ENCODE measurements at regions of chr6 and their contacts with region 1.

Region 1: DNA sequence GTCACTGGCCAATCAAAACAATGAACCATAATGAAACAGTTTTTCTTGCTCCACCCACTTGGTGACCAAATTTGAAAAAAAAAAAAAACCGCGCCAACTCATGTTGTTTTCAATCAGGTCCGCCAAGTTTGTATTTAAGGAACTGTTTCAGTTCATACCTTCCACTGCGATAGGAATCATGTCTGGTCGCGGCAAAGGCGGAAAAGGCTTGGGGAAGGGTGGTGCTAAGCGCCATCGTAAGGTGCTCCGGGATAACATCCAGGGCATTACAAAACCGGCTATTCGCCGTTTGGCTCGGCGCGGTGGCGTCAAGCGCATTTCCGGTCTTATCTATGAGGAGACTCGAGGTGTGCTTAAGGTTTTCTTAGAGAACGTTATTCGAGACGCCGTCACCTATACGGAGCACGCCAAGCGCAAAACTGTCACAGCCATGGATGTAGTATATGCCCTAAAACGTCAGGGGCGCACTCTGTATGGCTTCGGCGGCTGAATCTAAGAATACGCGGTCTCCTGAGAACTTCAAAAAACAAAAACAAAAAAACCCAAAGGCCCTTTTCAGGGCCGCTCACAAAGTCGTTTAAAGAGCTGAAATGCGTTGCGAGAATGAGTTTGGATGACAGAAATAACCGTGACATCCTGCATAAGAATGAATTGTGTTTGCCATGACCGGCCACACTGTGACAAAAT is 16.7 kb downstream of the HFE start:
- DNase-seq: peak; percentile 69
- H3K4me3 ChIP-seq: peak overlapping the region; percentile 55 to 65
- H3K27ac ChIP-seq: peak overlapping the region; percentile 85 to 97
- H3K4me1 ChIP-seq: peaks cover 7 to 17% of the 10 kb centered on the region in 2 experiments
- H3K27me3 ChIP-seq: no peaks in the 10 kb centered on the region
- CTCF ChIP-seq: peak; percentile 62
- EP300 ChIP-seq: peak; percentile 91 to 97
- RAD21 ChIP-seq: no peak

Region 2: DNA sequence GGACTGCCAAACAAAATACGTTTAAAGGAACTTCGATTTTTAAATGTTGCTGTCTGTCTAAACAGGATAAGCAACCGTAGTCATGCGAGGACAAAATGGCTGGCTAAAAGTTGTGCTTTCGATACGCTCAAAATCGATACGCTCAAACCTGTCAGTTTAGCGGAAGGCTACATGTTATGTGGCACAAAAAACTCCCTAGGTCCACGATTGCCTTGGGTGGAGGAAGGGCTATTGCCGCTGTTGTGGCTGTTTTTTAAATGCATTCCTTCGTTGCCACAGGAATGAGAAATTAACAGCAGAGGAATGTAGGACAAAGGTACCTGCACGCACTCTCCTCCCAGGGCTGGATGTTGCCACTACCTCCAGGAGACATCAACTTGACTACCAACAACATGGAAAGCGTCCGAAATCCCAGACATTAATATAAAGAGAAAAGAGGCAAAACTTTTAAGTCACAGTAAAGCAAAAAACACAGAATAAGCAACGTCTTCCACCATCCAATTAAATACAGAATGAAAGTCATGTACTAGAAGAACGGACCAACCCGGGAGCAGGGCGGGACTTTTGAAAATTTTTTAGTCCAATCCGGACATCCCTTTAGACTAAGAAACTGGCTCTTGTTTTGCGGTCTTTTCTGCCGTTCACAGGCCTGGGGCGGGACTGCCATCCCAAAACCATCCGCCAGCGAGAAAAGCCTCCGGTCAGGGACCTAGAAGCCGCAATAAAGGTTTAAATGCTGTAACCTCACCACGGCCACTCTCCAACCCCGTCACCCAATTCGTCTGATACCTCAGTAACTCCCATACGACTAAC is 48.9 kb before region 1 on chr6:
- CTCF ChIA-PET with region 1: interaction called, 660 read pairs
- POLR2A ChIA-PET with region 1: interaction called, 24 read pairs
- DNase-seq: peak; percentile 57
- H3K4me3 ChIP-seq: peak overlapping the region; percentile 79 to 80
- H3K27ac ChIP-seq: peak overlapping the region; percentile 97 to 98
- H3K4me1 ChIP-seq: peaks cover 0 to 7% of the 10 kb centered on the region in 2 experiments; a peak in 3 of 4 replicates
- H3K27me3 ChIP-seq: no peaks in the 10 kb centered on the region
- CTCF ChIP-seq: no peak
- EP300 ChIP-seq: no peak; a peak in 1 of 4 replicates
- RAD21 ChIP-seq: no peak

Region 3: DNA sequence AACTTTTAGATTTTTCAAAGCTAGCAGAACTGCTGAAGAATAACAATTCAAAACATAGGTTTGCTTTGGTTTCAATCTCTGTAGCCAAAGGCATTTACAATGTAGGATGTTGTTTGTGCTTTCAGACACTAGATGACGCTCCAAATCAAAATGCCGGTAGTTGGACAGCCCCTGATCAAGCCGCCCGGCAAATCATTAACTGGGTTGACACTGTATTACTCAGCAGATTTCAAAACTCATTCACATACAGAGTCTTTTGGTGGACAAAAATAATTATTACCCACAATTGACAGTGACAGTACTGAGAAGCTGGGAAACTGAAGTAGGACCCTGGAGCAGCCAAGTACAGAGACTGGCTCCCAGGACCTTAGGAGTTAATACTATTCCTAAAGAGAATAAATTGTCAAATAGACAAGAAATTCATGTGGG is 37.9 kb before region 1 on chr6:
- CTCF ChIA-PET with region 1: interaction called, 660 read pairs
- POLR2A ChIA-PET with region 1: interaction called, 17 read pairs
- DNase-seq: peak; percentile 66
- H3K4me3 ChIP-seq: peak overlapping the region in 1 of 2 experiments; percentile 23; a peak in 1 of 4 replicates
- H3K27ac ChIP-seq: no peak overlapping the region
- H3K4me1 ChIP-seq: no peaks in the 10 kb centered on the region
- H3K27me3 ChIP-seq: no peaks in the 10 kb centered on the region
- CTCF ChIP-seq: peak; percentile 91
- EP300 ChIP-seq: no peak
- RAD21 ChIP-seq: peak; percentile 86

Region 4: DNA sequence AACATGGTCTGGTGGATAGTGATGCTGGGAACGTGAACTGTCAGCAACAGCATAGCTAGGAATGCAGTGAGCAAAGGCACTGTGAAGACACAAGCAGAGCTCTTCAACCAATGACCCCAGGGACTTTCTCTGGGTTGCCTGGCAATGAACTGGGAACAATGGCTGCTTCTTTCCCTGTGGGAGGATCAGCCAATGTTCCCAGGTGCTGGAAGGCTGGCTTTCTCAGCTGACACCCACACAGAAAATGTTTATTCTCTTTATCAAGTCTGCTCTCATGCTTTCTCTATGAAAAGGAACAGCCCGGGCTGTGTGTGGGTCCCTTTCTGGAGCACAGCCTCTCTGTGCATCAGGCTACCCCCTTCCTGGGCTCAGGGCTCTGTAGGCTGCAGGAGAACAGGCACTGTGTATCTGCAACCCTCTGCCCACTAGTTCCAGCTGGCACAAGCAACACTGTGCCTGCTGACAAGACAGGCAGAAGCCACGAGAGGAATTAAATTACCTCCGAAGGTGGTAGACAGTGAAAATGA is 37.5 kb after region 1 on chr6:
- CTCF ChIA-PET with region 1: no interaction called
- POLR2A ChIA-PET with region 1: no interaction called
- DNase-seq: no peak
- H3K4me3 ChIP-seq: no peak overlapping the region
- H3K27ac ChIP-seq: peak overlapping the region in 1 of 2 experiments; percentile 44; a peak in 1 of 4 replicates
- H3K4me1 ChIP-seq: peaks cover 0 to 13% of the 10 kb centered on the region in 2 experiments; a peak in 2 of 4 replicates
- H3K27me3 ChIP-seq: no peaks in the 10 kb centered on the region
- CTCF ChIP-seq: no peak
- EP300 ChIP-seq: no peak
- RAD21 ChIP-seq: no peak

Region 5: DNA sequence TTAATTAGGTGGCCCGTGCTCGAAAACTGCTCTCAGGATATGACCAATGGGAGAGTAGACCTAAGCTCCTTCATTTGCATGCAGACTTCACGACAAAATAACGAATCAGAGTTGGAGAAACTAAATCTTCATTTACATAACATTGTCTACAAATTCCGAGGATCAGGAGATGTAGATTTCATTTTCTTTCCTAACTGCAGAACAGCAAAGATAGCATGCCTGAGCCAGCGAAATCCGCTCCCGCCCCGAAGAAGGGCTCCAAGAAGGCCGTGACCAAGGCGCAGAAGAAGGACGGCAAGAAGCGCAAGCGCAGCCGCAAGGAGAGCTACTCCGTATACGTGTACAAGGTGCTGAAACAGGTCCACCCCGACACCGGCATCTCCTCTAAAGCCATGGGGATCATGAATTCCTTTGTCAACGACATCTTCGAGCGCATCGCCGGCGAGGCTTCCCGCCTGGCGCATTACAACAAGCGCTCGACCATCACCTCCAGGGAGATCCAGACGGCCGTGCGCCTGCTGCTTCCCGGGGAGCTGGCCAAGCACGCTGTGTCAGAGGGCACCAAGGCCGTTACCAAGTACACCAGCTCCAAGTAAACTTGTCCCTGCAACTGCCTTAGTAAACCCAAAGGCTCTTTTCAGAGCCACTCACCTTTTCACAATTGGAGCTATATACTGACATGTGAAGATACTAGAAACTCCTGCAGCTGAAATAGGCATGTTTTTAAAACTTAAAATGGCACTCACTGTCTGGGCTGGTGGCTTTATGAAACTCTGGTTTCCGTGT is 79.9 kb after region 1 on chr6:
- CTCF ChIA-PET with region 1: interaction called, 3 read pairs
- POLR2A ChIA-PET with region 1: interaction called, 13 read pairs
- DNase-seq: peak; percentile 71
- H3K4me3 ChIP-seq: peak overlapping the region; percentile 49 to 56
- H3K27ac ChIP-seq: peak overlapping the region; percentile 62 to 97
- H3K4me1 ChIP-seq: peaks cover 4 to 6% of the 10 kb centered on the region in 2 experiments; a peak in 2 of 4 replicates
- H3K27me3 ChIP-seq: no peaks in the 10 kb centered on the region
- CTCF ChIP-seq: no peak
- EP300 ChIP-seq: peak in 1 of 2 experiments; percentile 39; a peak in 1 of 4 replicates
- RAD21 ChIP-seq: no peak

Region 6: DNA sequence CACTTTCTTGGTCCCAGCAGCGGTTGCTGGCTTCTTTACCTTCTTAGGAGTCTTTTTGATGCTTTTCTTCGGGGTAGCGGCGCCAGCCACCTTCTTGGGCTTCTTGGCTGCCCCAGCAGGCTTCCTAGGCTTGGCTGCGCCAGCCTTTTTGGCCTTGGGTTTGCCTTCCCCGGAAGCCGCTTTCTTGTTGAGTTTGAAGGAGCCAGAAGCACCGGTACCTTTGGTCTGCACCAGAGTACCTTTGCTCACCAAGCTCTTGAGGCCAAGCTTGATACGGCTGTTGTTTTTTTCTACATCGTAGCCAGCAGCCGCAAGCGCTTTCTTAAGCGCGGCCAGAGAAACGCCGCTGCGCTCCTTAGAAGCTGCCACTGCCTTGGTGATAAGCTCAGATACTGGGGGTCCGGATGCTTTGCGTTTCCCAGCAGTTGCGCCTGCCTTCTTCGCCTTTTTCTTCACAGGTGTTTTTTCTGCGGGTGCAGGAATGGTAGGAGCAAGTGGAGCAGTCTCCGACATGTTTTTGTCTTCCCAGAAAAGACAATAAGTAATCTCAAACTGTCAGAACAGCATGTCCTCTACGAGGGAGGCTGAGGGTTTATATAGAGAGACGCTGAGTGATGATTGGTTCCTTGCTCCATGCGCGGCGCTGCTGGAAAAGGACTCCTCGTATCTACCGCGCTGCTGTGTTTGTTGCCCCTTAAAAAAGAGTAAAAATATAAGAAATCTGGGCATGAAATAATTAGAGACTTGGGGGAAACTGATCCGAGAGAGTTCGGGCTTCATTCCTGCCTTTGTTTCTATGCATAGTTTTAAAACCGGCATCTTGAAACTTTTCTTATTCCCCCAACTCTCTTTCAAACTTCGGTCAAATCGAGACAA is 130.7 kb after region 1 on chr6:
- CTCF ChIA-PET with region 1: no interaction called
- POLR2A ChIA-PET with region 1: interaction called, 12 read pairs
- DNase-seq: peak; percentile 73
- H3K4me3 ChIP-seq: peak overlapping the region; percentile 61 to 72
- H3K27ac ChIP-seq: peak overlapping the region; percentile 77 to 85
- H3K4me1 ChIP-seq: peaks cover 0 to 3% of the 10 kb centered on the region in 2 experiments; a peak in 3 of 4 replicates
- H3K27me3 ChIP-seq: no peaks in the 10 kb centered on the region
- CTCF ChIP-seq: no peak
- EP300 ChIP-seq: peak in 1 of 2 experiments; percentile 52; a peak in 1 of 4 replicates
- RAD21 ChIP-seq: no peak

Region 7: DNA sequence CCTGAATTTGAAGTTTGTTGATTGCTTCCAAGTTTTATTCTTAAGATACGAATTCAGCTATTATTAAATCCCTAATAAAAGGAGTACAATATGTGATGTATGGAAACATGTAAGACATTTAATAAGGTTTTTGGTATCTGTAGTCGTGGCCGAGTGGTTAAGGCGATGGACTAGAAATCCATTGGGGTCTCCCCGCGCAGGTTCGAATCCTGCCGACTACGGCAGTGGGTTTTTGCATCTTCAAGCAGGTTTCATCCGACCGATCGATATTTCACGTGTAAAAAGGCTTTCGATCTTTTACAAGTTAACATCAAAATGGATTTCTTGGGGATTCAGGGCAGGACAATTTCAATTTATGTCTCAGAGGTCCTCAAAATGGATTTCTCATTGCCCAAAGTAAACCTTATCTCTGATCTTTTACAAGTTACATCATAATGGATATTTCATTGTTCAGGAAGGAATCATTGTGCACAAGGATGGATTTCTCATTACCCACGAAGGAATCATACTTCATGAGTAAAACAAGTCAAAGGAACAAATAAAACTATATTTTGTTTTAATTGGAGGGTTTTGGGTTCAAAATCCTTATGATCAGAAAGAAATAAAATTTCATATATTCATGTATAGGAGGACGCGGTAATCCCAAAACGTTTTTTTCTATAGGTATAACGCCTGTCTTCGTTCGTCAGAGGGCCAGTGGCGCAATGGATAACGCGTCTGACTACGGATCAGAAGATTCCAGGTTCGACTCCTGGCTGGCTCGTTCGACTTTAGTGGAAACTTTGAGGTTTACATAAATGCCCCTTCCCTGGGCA is 223.7 kb after region 1 on chr6:
- CTCF ChIA-PET with region 1: no interaction called
- POLR2A ChIA-PET with region 1: no interaction called
- DNase-seq: peak; percentile 21
- H3K4me3 ChIP-seq: peak overlapping the region; percentile 56
- H3K27ac ChIP-seq: peak overlapping the region; percentile 57 to 76
- H3K4me1 ChIP-seq: peaks cover 0 to 2% of the 10 kb centered on the region in 2 experiments; a peak in 2 of 4 replicates
- H3K27me3 ChIP-seq: no peaks in the 10 kb centered on the region
- CTCF ChIP-seq: no peak
- EP300 ChIP-seq: peak in 1 of 2 experiments; percentile 23; a peak in 1 of 4 replicates
- RAD21 ChIP-seq: no peak

Measured in SK-N-SH (cell line).